GM12878 (cell line): ENCODE measurements at regions of chr22 and their contacts with region 1.

Region 1: GRCh38 chr22:49930739-49931412 is 12.4 kb downstream of the CRELD2 start:
- DNase-seq: peak; percentile 78
- ATAC-seq: peak; percentile 72
- H3K4me3 ChIP-seq: no peak overlapping the region
- H3K27ac ChIP-seq: no peak overlapping the region
- H3K4me1 ChIP-seq: peaks cover 55% of the 10 kb centered on the region
- H3K27me3 ChIP-seq: no peaks in the 10 kb centered on the region
- CTCF ChIP-seq: peak; percentile 74 to 96 (median 88); a peak in 5 of 6 replicates
- EP300 ChIP-seq: no peak
- POLR2A ChIP-seq: no peak
- RAD21 ChIP-seq: peak; percentile 86

Region 2: DNA sequence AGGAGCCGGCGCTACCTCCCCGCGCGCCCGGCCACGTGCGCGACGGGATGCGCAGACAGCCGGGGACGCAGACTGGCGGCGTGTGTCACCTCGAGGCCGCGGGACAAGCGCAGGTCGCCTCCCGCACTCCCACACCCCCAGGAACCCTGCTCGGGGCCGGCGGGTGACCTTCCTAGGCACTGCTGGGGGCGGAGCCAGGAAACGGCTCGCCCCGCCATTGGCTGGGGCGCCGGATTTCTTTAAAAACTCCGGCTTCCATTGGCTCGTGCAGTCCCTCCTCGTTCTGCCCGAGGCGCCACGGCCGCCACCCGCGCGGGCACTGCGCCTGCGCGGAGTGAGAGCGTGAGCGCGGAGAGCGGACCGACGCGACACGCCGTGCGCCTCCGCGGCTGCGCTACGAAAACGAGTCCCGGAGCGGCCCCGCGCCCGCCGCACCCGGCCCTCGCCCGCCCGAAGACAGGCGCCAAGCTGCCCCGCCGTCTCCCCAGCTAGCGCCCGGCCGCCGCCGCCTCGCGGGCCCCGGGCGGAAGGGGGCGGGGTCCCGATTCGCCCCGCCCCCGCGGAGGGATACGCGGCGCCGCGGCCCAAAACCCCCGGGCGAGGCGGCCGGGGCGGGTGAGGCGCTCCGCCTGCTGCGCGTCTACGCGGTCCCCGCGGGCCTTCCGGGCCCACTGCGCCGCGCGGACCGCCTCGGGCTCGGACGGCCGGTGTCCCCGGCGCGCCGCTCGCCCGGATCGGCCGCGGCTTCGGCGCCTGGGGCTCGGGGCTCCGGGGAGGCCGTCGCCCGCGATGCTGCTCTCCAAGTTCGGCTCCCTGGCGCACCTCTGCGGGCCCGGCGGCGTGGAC is 29.5 kb after region 1 on chr22 and contains the start of gene PIM3:
- CTCF ChIA-PET with region 1: interaction called, 6 read pairs
- POLR2A ChIA-PET with region 1: interaction called, 15 read pairs
- RAD21 ChIA-PET with region 1: interaction called, 15 read pairs
- SMC1A ChIA-PET with region 1: interaction called, 3 read pairs
- in situ Hi-C with region 1: no loop called
- intact Hi-C with region 1: no loop called
- DNase-seq: peak; percentile 84
- ATAC-seq: peak; percentile 82
- H3K4me3 ChIP-seq: peak within 1 kb of the TSS; percentile 98
- H3K27ac ChIP-seq: peak within 1 kb of the TSS; percentile 53
- H3K4me1 ChIP-seq: peaks cover 16% of the 10 kb centered on the region
- H3K27me3 ChIP-seq: no peaks in the 10 kb centered on the region
- CTCF ChIP-seq: no peak
- EP300 ChIP-seq: peak in 1 of 2 experiments; percentile 20; a peak in 1 of 4 replicates
- POLR2A ChIP-seq: peak; percentile 82
- RAD21 ChIP-seq: no peak
- polyA plus RNA-seq, gene PIM3: 0.31 to 1.5 TPM

Region 3: GRCh38 chr22:49992921-49993648 is 62.2 kb after region 1 on chr22:
- CTCF ChIA-PET with region 1: interaction called, 36 read pairs
- POLR2A ChIA-PET with region 1: no interaction called
- RAD21 ChIA-PET with region 1: interaction called, 29 read pairs
- SMC1A ChIA-PET with region 1: interaction called, 30 read pairs
- in situ Hi-C with region 1: no loop called
- intact Hi-C with region 1: loop called (anchors 1 kb)
- DNase-seq: no peak
- ATAC-seq: peak; percentile 99
- H3K4me3 ChIP-seq: no peak overlapping the region
- H3K27ac ChIP-seq: no peak overlapping the region
- H3K4me1 ChIP-seq: no peaks in the 10 kb centered on the region
- H3K27me3 ChIP-seq: no peaks in the 10 kb centered on the region; a peak in 1 of 4 replicates
- CTCF ChIP-seq: peak; percentile 81 to 95 (median 93); a peak in 5 of 6 replicates
- EP300 ChIP-seq: no peak
- POLR2A ChIP-seq: no peak
- RAD21 ChIP-seq: peak; percentile 72

Region 4: GRCh38 chr22:50148991-50149721 is 218.3 kb after region 1 on chr22:
- CTCF ChIA-PET with region 1: interaction called, 3 read pairs
- POLR2A ChIA-PET with region 1: no interaction called
- RAD21 ChIA-PET with region 1: no interaction called
- SMC1A ChIA-PET with region 1: no interaction called
- in situ Hi-C with region 1: no loop called
- intact Hi-C with region 1: loop called (anchors 1 kb)
- DNase-seq: peak; percentile 35
- ATAC-seq: peak; percentile 99
- H3K4me3 ChIP-seq: no peak overlapping the region
- H3K27ac ChIP-seq: no peak overlapping the region
- H3K4me1 ChIP-seq: no peaks in the 10 kb centered on the region
- H3K27me3 ChIP-seq: no peaks in the 10 kb centered on the region; a peak in 2 of 4 replicates
- CTCF ChIP-seq: peak; percentile 94 to 98 (median 97)
- EP300 ChIP-seq: no peak
- POLR2A ChIP-seq: no peak
- RAD21 ChIP-seq: peak; percentile 94